Calu3 (cell line): ENCODE measurements at regions of chrX and their contacts with region 1.

Region 1: GRCh38 chrX:106481341-106481740 is 130.4 kb upstream of the RADX start:
- DNase-seq: peak; percentile 59
- H3K4me3 Mint-ChIP-seq: no peak overlapping the region
- H3K27ac Mint-ChIP-seq: no peak overlapping the region
- H3K4me1 Mint-ChIP-seq: peaks cover 20% of the 10 kb centered on the region
- H3K27me3 Mint-ChIP-seq: peaks cover 20% of the 10 kb centered on the region
- CTCF ChIP-seq: peak; percentile 30

Region 2: GRCh38 chrX:106510713-106511403 is 29.5 kb after region 1 on chrX:
- CTCF ChIA-PET with region 1: no interaction called
- intact Hi-C with region 1: no loop called
- DNase-seq: no peak
- H3K4me3 Mint-ChIP-seq: no peak overlapping the region
- H3K27ac Mint-ChIP-seq: no peak overlapping the region
- H3K4me1 Mint-ChIP-seq: peaks cover 9% of the 10 kb centered on the region
- H3K27me3 Mint-ChIP-seq: no peaks in the 10 kb centered on the region
- CTCF ChIP-seq: no peak

Region 3: GRCh38 chrX:106619797-106620196 is 138.5 kb after region 1 on chrX:
- CTCF ChIA-PET with region 1: no interaction called
- intact Hi-C with region 1: loop called (anchors 5 kb)
- DNase-seq: peak; percentile 1
- H3K4me3 Mint-ChIP-seq: no peak overlapping the region
- H3K27ac Mint-ChIP-seq: no peak overlapping the region
- H3K4me1 Mint-ChIP-seq: peaks cover 6% of the 10 kb centered on the region
- H3K27me3 Mint-ChIP-seq: no peaks in the 10 kb centered on the region
- CTCF ChIP-seq: no peak

Region 4: DNA sequence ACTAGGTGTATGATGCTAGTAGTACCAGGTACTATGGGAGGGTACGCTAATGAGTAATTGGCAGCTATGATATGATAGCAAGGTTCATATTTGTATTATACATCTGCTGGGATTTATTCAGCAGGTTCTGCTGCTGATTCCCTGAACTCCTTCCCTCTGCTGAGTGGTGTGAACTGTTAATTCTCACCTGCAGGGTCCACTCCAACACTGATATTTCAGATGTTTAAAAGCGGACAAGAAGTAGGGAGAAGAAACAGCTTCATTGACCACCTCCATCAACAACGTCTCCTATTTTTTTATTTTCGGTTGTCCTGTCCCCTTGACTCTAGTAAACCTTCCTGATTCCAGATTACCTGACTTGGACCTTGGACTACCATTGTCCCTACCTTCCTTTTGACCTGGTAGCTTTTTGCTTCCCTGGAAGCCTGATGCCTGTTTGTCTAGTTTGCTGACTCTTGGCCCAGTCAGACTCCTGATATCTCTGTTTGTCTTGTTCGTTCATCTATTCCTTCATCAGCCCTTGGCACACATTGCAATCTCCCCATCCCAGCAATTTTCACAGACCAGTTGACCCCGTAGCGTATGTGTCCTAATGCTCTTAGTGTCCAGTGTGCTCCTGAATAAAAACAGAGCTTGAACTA is 211.2 kb after region 1 on chrX:
- CTCF ChIA-PET with region 1: no interaction called
- intact Hi-C with region 1: loop called (anchors 5 kb)
- DNase-seq: peak; percentile 14
- H3K4me3 Mint-ChIP-seq: peak overlapping the region; percentile 66
- H3K27ac Mint-ChIP-seq: peak overlapping the region; percentile 78
- H3K4me1 Mint-ChIP-seq: peaks cover 28% of the 10 kb centered on the region
- H3K27me3 Mint-ChIP-seq: no peaks in the 10 kb centered on the region
- CTCF ChIP-seq: no peak

Region 5: DNA sequence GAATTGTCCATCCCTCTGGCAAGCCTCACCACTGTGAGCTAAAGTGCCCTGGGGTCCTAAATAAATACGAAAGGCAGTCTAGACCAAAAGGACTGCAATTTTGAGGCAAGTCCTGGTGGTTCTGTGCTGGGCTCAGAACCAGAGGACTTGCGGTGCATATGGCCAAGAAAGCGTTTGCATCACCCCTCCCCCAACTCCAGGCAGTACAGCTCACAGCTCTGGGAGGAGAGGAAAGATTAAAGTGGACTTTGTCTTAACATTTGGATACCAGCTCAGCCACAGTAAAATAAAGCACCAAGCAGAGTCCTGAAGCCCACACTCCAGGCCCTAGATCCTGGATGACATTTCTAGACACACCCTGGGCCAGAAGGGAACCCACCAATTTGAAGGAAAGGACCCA is 270.1 kb after region 1 on chrX:
- CTCF ChIA-PET with region 1: no interaction called
- intact Hi-C with region 1: loop called (anchors 1 kb)
- DNase-seq: no peak
- H3K4me3 Mint-ChIP-seq: no peak overlapping the region
- H3K27ac Mint-ChIP-seq: no peak overlapping the region
- H3K4me1 Mint-ChIP-seq: no peaks in the 10 kb centered on the region
- H3K27me3 Mint-ChIP-seq: no peaks in the 10 kb centered on the region
- CTCF ChIP-seq: no peak

Region 6: GRCh38 chrX:106791495-106791894 is 310.2 kb after region 1 on chrX:
- CTCF ChIA-PET with region 1: no interaction called
- intact Hi-C with region 1: loop called (anchors 1 kb)
- DNase-seq: no peak
- H3K4me3 Mint-ChIP-seq: no peak overlapping the region
- H3K27ac Mint-ChIP-seq: no peak overlapping the region
- H3K4me1 Mint-ChIP-seq: peaks cover 8% of the 10 kb centered on the region
- H3K27me3 Mint-ChIP-seq: no peaks in the 10 kb centered on the region
- CTCF ChIP-seq: no peak

Region 7: DNA sequence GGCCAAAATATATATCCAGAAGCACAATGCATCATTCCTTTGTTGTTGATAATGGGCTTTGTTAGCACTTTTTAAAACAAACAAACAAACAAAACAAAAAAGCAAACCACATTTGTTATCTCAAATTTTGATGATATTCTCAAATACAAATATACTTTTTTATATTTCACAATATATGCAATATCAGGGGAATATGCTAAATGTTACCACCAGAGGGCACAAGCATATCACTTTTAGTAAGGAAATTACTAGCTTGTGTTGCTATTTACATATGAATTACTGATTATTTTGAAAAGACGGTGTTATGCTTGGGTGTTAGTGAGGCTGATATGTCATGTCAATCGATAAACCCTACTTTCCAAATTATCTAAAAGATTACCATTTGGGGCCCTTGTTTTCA is 392.7 kb after region 1 on chrX:
- CTCF ChIA-PET with region 1: no interaction called
- intact Hi-C with region 1: loop called (anchors 5 kb)
- DNase-seq: peak; percentile 9
- H3K4me3 Mint-ChIP-seq: no peak overlapping the region
- H3K27ac Mint-ChIP-seq: no peak overlapping the region
- H3K4me1 Mint-ChIP-seq: no peaks in the 10 kb centered on the region
- H3K27me3 Mint-ChIP-seq: no peaks in the 10 kb centered on the region
- CTCF ChIP-seq: peak; percentile 36